ENCODE measurements at regions of chr11 and their contacts with region 1.

Region 1: DNA sequence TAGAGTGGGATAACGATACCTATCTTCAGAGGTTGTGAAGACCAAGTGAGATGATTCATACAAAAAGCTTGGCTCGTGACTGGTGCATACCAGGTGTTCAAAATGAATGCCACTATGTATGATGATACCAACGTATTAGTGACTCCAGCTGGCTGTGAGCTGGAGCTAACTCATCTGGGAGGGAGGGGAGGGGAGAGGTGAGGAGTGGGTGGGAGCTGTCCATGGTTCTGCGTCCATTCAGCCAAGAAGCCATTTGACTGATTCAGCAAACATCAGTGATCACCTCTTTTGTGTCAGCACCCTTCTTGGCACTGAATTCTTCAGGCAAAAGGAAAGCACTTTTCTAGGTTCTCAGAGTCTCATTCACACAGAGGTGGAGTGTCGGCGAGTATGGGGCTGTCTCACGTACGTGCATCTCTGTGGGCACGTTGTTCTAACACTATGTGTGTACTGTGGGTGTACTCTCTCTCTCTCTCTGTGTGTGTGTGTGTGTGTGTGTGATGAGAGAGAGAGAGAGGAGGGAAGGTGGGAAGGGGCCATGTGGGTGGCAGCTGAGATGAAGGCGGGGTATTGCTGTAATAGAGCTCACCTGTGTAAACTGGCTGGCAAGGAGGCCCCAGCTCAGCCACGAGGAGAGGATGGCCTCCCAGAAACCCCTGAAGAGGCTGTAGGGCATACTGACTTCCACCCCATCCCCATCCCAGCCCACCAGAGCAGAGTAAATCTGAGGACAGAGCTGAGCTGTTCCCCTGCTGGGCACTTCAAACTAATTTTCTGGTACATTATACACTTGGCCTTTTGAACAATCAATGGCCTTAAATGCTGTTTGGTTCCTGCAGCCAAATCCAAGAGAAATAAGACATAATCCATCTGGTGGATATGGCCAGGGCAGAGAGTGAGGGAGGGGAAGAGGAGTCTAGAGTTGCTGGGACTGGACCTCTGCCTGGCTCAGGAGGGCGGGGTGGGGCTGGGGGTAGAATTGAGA is 96.1 kb upstream of the THY1 start:
- DNase-seq: no peak
- ATAC-seq: no peak

Region 2: DNA sequence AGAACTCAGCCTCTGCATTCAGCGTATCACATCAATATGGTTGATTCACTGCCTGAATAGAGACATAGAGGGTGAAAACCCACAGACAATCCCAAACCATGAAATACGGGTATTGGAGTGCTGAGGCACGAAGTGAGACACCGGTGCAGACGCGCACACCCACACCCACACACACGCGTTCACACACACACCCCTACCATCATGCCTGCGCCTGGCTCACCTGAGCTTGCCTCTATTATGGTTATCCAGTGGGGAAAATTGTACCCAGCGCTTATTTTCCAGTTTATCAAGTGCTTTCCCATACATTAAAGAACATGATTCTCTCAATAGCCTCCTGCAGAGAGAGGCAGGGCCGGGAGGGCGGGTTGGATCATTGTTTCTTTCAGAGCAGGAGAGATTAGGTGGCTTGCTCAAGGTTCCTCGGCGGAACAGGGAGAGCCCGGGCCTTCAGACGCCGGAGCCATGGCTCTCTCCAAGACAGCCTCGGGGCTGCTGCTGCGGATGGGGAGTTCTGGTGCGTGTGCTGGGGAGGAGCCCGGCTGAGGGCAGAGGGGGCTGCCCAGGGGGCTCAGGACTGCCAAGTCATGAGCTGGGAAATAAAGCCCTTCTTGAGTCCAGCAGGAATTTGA is 17.1 kb before region 1 on chr11:
- intact Hi-C with region 1: loop called (anchors 1 kb)
- DNase-seq: no peak
- ATAC-seq: no peak